Heart left ventricle (tissue), 16 donors: ENCODE measurements at regions of chr12 and their contacts with region 1.

Region 1: DNA sequence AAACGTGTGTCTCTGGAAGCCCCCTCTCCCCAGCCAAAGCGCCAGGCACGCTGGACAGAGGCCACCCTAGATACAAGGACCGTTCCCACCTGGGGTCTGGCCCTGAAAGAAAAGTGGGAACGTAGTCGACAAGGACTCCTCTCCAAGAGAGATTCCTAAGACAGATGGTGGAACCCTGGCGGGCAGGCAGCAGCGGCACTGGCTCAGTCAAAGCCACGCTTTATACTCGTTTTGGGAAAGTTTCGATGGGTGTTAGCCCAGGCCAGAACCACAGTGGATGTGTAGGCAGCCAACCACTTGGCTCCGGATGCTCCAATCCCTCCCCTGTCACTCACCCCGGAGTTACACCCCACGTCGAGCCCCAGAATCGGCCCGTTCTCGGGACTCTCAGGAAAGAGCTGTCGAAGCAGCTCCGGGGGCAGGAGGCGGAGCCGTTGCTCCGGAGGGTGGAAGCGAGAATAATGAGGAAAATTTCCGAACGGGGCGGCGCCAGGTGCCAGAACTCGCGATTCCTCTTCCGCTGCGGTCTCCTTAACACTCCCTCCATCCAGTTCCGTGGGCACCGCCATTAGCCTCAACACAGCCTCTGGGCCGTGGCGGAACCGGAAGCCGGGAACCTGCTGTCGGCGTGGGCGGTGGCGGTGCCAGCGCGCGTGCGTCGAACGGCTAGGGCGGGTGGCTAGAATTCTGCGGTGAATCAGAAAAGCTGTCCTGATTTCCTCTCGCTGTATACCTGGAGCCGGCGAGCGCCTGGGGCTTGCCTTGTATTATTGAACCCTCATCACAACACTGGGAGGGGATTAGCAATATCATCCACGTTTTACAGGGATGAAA is at the start of gene BCDIN3D:
- DNase-seq: peak; percentile 91 to 96 (median 94)
- ATAC-seq: peak; percentile 96 to 98 (median 97)
- H3K4me3 ChIP-seq: peak within 1 kb of the TSS; percentile 50 to 91 (median 66)
- H3K27ac ChIP-seq: peak within 1 kb of the TSS; percentile 48 to 93 (median 88)
- H3K4me1 ChIP-seq: peaks cover 0 to 20% (median 12%) of the 10 kb centered on the region in 12 donors
- H3K27me3 ChIP-seq: peaks cover 0 to 11% (median 0%) of the 10 kb centered on the region in 9 donors
- CTCF ChIP-seq: peak in 1 of 12 donors; percentile 4
- POLR2A ChIP-seq: peak in 1 of 2 donors; percentile 68
- total RNA-seq, gene BCDIN3D: 1.7 to 3.9 (median 2.4) TPM

Region 2: GRCh38 chr12:48999371-49000131 is 843.2 kb before region 1 on chr12 and contains the start of gene DDN:
- intact Hi-C with region 1: no loop called
- DNase-seq: peak in 2 of 5 donors; percentile 68 to 71
- ATAC-seq: peak; percentile 57 to 73 (median 64)
- H3K4me3 ChIP-seq: peak within 1 kb of the TSS; percentile 15 to 66 (median 47)
- H3K27ac ChIP-seq: peak within 1 kb of the TSS in 8 of 12 donors; percentile 3 to 68 (median 40)
- H3K4me1 ChIP-seq: peaks cover 4 to 55% (median 39%) of the 10 kb centered on the region in 12 donors
- H3K27me3 ChIP-seq: peaks cover 3 to 48% (median 6%) of the 10 kb centered on the region in 9 donors
- CTCF ChIP-seq: no peak
- POLR2A ChIP-seq: no peak
- total RNA-seq, gene DDN: 0.40 to 2.8 (median 0.95) TPM

Region 3: GRCh38 chr12:49623142-49623904 is 219.4 kb before region 1 on chr12 and contains the start of gene PRPF40B:
- intact Hi-C with region 1: loop called in 1 of 10 experiments (anchors 10 kb)
- DNase-seq: peak; percentile 90 to 93 (median 91)
- ATAC-seq: peak; percentile 86 to 91 (median 90)
- H3K4me3 ChIP-seq: peak within 1 kb of the TSS; percentile 38 to 75 (median 64)
- H3K27ac ChIP-seq: peak within 1 kb of the TSS; percentile 43 to 94 (median 84)
- H3K4me1 ChIP-seq: peaks cover 0 to 25% (median 16%) of the 10 kb centered on the region in 12 donors
- H3K27me3 ChIP-seq: peaks cover 0 to 7% (median 0%) of the 10 kb centered on the region in 9 donors
- CTCF ChIP-seq: peak; percentile 22 to 65 (median 44)
- POLR2A ChIP-seq: peak; percentile 63 to 93
- total RNA-seq, gene PRPF40B: 12.7 to 25.5 (median 20.9) TPM

Region 4: GRCh38 chr12:49636979-49637755 is 205.6 kb before region 1 on chr12:
- intact Hi-C with region 1: loop called in 2 of 10 experiments (anchors 10 kb)
- DNase-seq: peak; percentile 47 to 65 (median 63)
- ATAC-seq: peak; percentile 65 to 81 (median 77)
- H3K4me3 ChIP-seq: no peak overlapping the region
- H3K27ac ChIP-seq: peak overlapping the region in 7 of 12 donors; percentile 4 to 55 (median 42)
- H3K4me1 ChIP-seq: peaks cover 0 to 19% (median 14%) of the 10 kb centered on the region in 12 donors
- H3K27me3 ChIP-seq: no peaks in the 10 kb centered on the region
- CTCF ChIP-seq: peak; percentile 47 to 79 (median 62)
- POLR2A ChIP-seq: no peak

Region 5: GRCh38 chr12:49644620-49644994 is 198.1 kb before region 1 on chr12:
- intact Hi-C with region 1: loop called in 2 of 10 experiments (anchors 10 kb)
- DNase-seq: peak; percentile 78 to 89 (median 84)
- ATAC-seq: peak; percentile 71 to 82 (median 78)
- H3K4me3 ChIP-seq: no peak overlapping the region
- H3K27ac ChIP-seq: peak overlapping the region in 8 of 12 donors; percentile 23 to 79 (median 48)
- H3K4me1 ChIP-seq: peaks cover 0 to 55% (median 40%) of the 10 kb centered on the region in 12 donors
- H3K27me3 ChIP-seq: no peaks in the 10 kb centered on the region
- CTCF ChIP-seq: peak; percentile 89 to 98 (median 94)
- POLR2A ChIP-seq: no peak

Region 6: DNA sequence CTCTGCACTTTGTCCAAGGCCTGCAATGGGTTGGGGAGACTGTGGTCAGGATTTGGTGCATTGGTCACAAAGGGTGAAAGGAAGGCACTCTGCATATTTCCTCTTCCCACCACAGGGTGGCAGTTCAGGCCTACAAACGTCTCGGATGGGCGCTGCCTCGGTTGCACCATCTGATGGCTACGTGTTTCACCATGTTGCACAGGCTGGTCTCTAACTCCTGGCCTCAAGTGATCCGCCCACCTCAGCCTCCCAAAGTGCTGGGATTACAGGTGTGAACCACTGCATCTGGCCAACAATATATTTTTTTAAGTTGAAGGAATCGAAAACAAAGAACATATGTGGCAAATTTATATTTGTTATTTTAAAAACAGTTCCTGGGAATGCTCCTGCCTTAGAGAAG is 66.3 kb before region 1 on chr12:
- intact Hi-C with region 1: loop called (anchors 1 to 5 kb)
- DNase-seq: peak; percentile 52 to 79 (median 71)
- ATAC-seq: peak; percentile 61 to 94 (median 89)
- H3K4me3 ChIP-seq: no peak overlapping the region
- H3K27ac ChIP-seq: no peak overlapping the region
- H3K4me1 ChIP-seq: peaks cover 0 to 7% (median 0%) of the 10 kb centered on the region in 12 donors
- H3K27me3 ChIP-seq: no peaks in the 10 kb centered on the region
- CTCF ChIP-seq: peak; percentile 63 to 85 (median 80)
- POLR2A ChIP-seq: no peak

Region 7: GRCh38 chr12:49945394-49946080 is 102.8 kb after region 1 on chr12:
- intact Hi-C with region 1: no loop called
- DNase-seq: peak; percentile 73 to 92 (median 85)
- ATAC-seq: peak; percentile 92 to 97 (median 96)
- H3K4me3 ChIP-seq: peak overlapping the region in 9 of 12 donors; percentile 19 to 51 (median 39)
- H3K27ac ChIP-seq: peak overlapping the region in 6 of 12 donors; percentile 18 to 63 (median 45)
- H3K4me1 ChIP-seq: peaks cover 0 to 13% (median 5%) of the 10 kb centered on the region in 12 donors
- H3K27me3 ChIP-seq: peaks cover 0 to 2% (median 0%) of the 10 kb centered on the region in 9 donors
- CTCF ChIP-seq: peak; percentile 86 to 98 (median 90)
- POLR2A ChIP-seq: no peak